ENCODE measurements at regions of chr19 and their contacts with region 1.

Region 1: DNA sequence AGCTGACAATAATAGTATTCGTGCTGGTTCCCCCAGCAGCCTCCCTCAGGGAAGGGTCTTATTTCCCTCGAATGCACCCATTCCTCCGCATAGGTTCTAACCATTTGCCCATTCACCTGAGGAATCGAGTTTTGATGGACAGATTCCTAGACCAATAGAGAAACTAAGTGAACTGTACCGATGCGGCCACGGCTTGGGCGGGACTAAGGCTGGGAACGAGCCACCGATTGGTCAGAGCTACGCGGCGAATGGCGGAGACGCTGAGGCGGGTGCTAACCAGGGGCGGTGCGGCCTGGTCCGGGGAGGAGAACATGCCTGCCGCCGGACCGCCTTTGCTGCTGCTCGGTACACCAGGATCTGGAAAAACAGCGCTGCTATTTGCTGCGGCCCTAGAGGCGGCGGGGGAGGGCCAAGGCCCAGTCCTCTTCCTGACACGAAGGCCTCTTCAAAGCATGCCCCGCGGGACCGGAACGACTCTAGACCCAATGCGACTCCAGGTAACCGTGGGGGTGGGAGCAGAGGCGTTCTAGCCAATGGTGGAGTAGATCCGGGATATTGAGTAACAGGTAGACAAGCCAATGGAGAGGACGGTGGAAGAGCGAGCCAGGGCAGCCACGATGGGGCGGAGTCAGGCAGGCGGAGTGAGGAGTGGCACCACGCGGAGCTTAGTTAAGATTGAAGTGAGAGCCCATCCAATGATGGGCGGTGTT is at the start of gene SWSAP1:
- DNase-seq: peak; percentile 99
- H3K4me3 Mint-ChIP-seq: no peak within 1 kb of the TSS
- H3K27ac Mint-ChIP-seq: no peak within 1 kb of the TSS
- H3K4me1 Mint-ChIP-seq: peaks cover 28% of the 10 kb centered on the region
- H3K27me3 Mint-ChIP-seq: no peaks in the 10 kb centered on the region
- total RNA-seq, gene SWSAP1: 1.5 to 1.7 TPM

Region 2: GRCh38 chr19:11155373-11156120 is 219.0 kb before region 1 on chr19 and contains the start of gene SPC24:
- CTCF ChIA-PET with region 1: no interaction called
- POLR2A ChIA-PET with region 1: no interaction called
- intact Hi-C with region 1: no loop called
- DNase-seq: peak; percentile 96
- H3K4me3 Mint-ChIP-seq: peak within 1 kb of the TSS; percentile 81
- H3K27ac Mint-ChIP-seq: peak within 1 kb of the TSS; percentile 79
- H3K4me1 Mint-ChIP-seq: peaks cover 11% of the 10 kb centered on the region
- H3K27me3 Mint-ChIP-seq: no peaks in the 10 kb centered on the region
- total RNA-seq, gene SPC24: 64.1 to 70.3 TPM

Region 3: GRCh38 chr19:11306334-11306733 is 68.3 kb before region 1 on chr19:
- CTCF ChIA-PET with region 1: no interaction called
- POLR2A ChIA-PET with region 1: no interaction called
- intact Hi-C with region 1: no loop called
- DNase-seq: no peak
- H3K4me3 Mint-ChIP-seq: no peak overlapping the region
- H3K27ac Mint-ChIP-seq: no peak overlapping the region
- H3K4me1 Mint-ChIP-seq: no peaks in the 10 kb centered on the region
- H3K27me3 Mint-ChIP-seq: peaks cover 7% of the 10 kb centered on the region

Region 4: DNA sequence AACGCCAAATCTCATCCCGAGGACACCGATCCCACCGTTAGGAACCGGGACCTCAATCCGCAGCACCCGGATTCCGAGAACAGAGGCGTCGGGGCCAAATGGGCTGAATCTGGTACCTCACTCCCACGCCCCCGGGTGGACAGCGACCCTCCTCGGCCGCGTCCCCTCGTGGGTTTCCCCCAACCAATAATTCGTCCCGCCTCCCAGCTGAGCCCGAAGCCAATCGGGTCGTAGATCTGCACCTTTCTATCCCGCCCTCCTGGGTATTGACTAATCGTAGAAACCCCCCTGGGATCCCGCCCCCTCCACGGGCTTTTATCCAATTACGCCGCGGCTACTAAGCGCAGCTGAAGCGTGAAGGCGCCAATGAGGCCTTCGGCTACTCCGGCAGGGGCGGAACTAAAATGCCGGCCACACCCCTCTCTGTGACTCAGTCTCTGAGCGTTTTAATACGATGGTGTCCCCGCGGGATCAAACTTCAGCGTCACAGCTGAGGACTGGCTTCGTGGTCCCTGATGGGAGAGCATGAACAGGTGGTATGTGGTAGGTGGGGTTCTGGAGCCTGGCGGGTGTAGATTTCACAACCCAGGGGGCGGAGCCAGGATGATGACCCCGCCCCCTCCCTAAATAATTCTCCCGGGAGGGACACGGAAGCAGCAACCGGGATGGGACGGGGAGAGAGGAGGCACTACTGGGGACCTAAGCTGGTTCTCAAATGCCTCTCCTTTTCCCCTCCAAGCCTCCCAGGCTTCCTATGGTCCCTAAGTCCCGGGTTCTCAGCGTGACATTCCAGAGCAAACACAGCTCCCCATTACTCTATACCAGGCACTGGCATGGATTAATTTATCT is 28.3 kb before region 1 on chr19 and contains the starts of genes CCDC159 and TMEM205:
- CTCF ChIA-PET with region 1: interaction called, 7 read pairs
- POLR2A ChIA-PET with region 1: interaction called, 10 read pairs
- intact Hi-C with region 1: loop called (anchors 1 kb)
- DNase-seq: peak; percentile 100
- H3K4me3 Mint-ChIP-seq: peak within 1 kb of the TSS; percentile 80
- H3K27ac Mint-ChIP-seq: peak within 1 kb of the TSS; percentile 85
- H3K4me1 Mint-ChIP-seq: peaks cover 25% of the 10 kb centered on the region
- H3K27me3 Mint-ChIP-seq: no peaks in the 10 kb centered on the region
- total RNA-seq, gene CCDC159: 16.0 to 18.0 TPM
- total RNA-seq, gene TMEM205: 31.1 to 33.2 TPM

Region 5: GRCh38 chr19:11482384-11483050 is 107.9 kb after region 1 on chr19:
- CTCF ChIA-PET with region 1: interaction called, 36 read pairs
- POLR2A ChIA-PET with region 1: interaction called, 10 read pairs
- intact Hi-C with region 1: no loop called
- DNase-seq: peak; percentile 91
- H3K4me3 Mint-ChIP-seq: peak overlapping the region; percentile 70
- H3K27ac Mint-ChIP-seq: peak overlapping the region; percentile 52
- H3K4me1 Mint-ChIP-seq: peaks cover 19% of the 10 kb centered on the region
- H3K27me3 Mint-ChIP-seq: peaks cover 17% of the 10 kb centered on the region

Region 6: DNA sequence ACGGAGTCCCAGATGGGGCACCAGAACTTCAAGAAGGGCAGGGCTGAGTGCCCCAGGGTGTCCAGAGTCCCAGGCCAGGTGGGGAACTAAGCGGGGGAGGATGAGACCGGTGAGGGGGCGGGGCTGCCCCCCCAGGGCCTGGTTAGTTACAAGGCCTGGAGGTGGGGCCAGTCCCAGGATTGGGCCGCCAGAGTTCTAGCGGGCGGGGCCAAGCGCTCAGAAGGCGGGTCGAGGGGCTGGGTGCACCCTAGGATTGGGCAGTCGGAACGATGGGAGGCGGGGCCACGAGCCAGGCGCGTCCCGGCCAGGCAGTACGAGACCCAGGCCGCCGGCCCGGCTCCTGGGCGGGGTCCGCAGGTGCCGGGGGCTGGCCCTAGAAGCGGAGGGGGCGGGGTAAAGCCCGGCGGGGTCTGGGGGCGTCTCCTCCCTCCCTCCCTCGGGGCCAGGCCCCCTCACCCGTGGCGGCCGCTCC is 130.5 kb after region 1 on chr19:
- CTCF ChIA-PET with region 1: no interaction called
- POLR2A ChIA-PET with region 1: interaction called, 3 read pairs
- intact Hi-C with region 1: loop called (anchors 1 kb)
- DNase-seq: peak; percentile 97
- H3K4me3 Mint-ChIP-seq: peak overlapping the region; percentile 83
- H3K27ac Mint-ChIP-seq: peak overlapping the region; percentile 58
- H3K4me1 Mint-ChIP-seq: peaks cover 14% of the 10 kb centered on the region
- H3K27me3 Mint-ChIP-seq: no peaks in the 10 kb centered on the region

Region 7: GRCh38 chr19:11597202-11598102 is 222.9 kb after region 1 on chr19 and contains the start of gene ZNF627:
- CTCF ChIA-PET with region 1: no interaction called
- POLR2A ChIA-PET with region 1: no interaction called
- intact Hi-C with region 1: loop called (anchors 1 kb)
- DNase-seq: peak; percentile 99
- H3K4me3 Mint-ChIP-seq: peak within 1 kb of the TSS; percentile 90
- H3K27ac Mint-ChIP-seq: peak within 1 kb of the TSS; percentile 81
- H3K4me1 Mint-ChIP-seq: peaks cover 29% of the 10 kb centered on the region
- H3K27me3 Mint-ChIP-seq: no peaks in the 10 kb centered on the region
- total RNA-seq, gene ZNF627: 6.6 to 7.0 TPM